OCI-LY7 (cell line): ENCODE measurements at regions of chr4 and their contacts with region 1.

Region 1: DNA sequence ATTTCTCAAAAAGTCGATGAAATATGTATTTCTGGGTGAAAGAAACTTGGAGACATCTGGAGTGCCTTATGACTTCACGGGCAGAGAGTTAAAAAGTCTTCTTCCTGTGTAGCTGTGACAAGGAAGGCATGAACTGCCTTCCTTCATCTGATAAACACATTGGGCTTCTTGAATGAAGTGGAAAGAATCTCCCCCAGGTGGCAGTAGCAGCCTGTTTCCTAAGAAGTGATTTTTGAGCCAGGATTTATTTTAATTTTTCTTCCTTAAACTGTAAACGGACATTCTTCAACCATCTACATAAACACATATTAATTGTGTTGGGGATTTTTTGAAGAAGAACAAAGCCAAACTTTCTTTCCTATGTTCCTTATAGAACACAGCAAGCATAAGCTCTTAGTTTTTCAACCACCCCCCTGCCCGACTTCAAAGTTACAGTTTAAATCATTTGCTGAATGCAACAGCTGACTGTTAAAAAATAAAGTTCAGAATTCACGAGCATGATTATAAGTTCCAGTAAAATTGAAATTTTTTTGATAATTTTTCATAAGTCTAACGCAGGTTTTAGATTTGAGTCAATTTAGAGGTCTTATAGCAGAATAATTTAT is 980 bp upstream of the GIMD1 start:
- DNase-seq: peak; percentile 64
- H3K4me3 ChIP-seq: no peak overlapping the region
- H3K27ac ChIP-seq: no peak overlapping the region
- H3K4me1 ChIP-seq: no peaks in the 10 kb centered on the region
- CTCF ChIP-seq: peak; percentile 88

Region 2: DNA sequence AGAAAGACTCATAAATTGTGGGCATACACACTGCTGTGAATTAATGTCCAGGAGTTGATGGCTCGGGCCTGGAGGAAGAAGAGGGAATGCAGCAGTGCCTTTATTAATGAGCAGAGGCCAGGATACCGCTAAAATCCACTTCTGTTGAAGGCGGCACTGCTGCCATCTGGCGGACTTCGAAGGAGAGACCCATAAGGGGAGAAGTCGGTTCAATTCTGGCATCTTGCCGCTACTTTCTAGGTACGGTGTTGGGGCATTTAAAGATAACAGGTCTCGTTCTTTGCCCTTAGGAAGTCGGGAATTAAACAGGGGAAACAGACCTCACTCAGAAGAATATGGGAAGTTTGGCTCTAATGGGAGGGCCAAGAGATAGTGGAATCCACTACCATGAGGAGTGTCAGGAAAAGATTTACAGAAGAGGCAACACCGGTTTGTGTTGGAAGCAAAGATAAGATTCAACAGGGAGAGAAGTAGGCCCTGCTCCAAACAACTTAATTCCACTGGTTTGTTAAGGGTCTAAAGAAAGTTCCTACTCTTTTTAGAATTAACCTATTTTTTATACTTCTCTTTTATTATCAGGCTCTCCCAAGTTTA is 132.6 kb after region 1 on chr4:
- CTCF ChIA-PET with region 1: no interaction called
- POLR2A ChIA-PET with region 1: no interaction called
- intact Hi-C with region 1: loop called (anchors 1 kb)
- DNase-seq: peak; percentile 57
- H3K4me3 ChIP-seq: no peak overlapping the region
- H3K27ac ChIP-seq: no peak overlapping the region
- H3K4me1 ChIP-seq: no peaks in the 10 kb centered on the region
- CTCF ChIP-seq: peak; percentile 83

Region 3: GRCh38 chr4:106898621-106899230 is 529.2 kb after region 1 on chr4:
- CTCF ChIA-PET with region 1: no interaction called
- POLR2A ChIA-PET with region 1: no interaction called
- intact Hi-C with region 1: loop called (anchors 5 kb)
- DNase-seq: peak; percentile 51
- H3K4me3 ChIP-seq: no peak overlapping the region
- H3K27ac ChIP-seq: no peak overlapping the region
- H3K4me1 ChIP-seq: no peaks in the 10 kb centered on the region
- CTCF ChIP-seq: peak; percentile 96